Naive thymus-derived CD8-positive, alpha-beta T cell (primary cell): ENCODE measurements at regions of chr17 and their contacts with region 1.

Region 1: DNA sequence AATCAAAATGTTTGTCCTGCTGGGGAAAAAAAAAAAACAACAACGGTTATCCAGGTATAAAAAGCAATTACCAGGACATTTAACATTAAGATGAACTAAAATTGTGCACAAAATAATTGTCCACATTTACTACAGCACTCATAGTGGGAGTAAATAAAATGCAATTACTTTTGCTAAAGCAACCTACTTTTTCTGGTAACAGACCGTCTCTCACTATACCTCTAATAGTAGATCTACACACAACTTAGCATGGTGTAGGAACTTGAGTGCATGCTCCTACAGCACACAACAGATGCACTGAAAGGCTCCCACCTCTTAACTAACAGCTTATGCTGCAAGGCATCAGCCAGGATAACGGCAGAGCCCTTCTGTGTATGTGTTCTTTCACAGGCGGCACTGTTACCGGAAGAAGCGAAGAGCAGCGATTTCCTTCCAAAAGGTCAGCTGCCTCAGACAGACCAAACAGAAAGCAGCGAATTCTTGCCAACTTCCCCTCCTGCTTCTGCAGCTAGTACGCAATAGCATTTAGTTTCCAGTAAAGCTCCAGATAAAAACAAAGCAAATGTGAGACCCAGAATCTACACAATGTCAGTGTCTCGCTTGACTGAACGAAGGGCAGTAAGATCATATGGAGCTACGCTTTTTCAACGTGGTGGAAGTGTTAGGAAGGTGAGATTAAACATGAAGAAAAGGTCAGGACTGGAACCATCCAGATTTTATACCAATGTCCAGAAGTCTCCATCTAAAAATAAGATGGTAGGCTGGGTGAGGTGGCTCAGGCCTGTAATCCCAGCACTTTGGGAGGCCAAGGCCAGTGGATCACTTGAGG is 27.6 kb downstream of the STAT5B start:
- DNase-seq: peak; percentile 50 to 92 (median 80)
- ATAC-seq: peak; percentile 85 to 91
- H3K4me3 Mint-ChIP-seq: peak overlapping the region; percentile 75 to 96 (median 90)
- H3K27ac Mint-ChIP-seq: peak overlapping the region; percentile 96 to 100 (median 98)
- H3K4me1 Mint-ChIP-seq: peaks cover 28 to 74% (median 64%) of the 10 kb centered on the region in 4 donors
- H3K27me3 Mint-ChIP-seq: no peaks in the 10 kb centered on the region

Region 2: DNA sequence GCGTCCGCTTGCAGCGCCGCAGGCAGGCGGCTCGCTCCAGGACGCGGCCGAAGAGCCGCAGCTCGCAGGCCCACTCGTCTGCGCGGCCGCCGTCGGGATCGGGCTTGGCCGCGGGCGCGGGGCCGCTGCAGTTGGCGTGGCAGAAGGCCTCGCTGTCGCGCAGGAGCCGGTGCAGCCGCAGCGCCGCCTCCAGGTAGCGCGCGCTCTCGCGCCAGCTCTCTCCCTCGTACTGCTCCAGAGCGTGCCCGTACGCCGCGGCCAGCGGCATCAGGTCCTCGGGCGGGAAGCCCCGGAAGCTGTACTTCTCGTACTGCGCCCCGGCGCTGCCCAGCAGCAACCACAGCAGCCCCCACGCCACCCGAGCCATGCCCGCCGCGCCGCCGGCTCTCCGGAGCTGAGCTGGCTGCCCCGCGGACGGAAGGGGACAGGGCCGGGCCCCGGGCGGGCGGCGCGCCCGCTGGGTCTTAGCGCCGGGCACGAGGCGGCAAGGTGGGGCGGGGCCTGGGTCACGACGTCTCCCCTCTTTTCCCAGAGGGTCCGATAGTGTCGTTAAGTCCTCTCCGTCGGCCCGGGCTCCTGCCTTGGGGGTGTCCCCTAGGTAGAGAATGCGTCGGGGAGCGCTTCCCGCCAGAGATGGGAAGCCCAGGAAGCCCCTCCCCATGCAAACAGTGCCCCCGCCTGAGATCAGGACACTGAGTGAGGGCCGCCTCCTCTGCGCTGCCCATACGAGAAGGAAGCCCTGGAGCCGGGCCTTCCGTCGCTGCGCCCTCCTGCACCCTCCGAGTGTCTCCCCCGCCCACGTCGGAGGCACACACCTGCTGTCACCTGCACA is 436.8 kb before region 1 on chr17 and contains the start of gene P3H4:
- POLR2A ChIA-PET with region 1: interaction called, 11 read pairs
- DNase-seq: peak; percentile 57 to 83 (median 75)
- ATAC-seq: peak; percentile 91 to 92
- H3K4me3 Mint-ChIP-seq: peak within 1 kb of the TSS; percentile 87 to 97 (median 93)
- H3K27ac Mint-ChIP-seq: peak within 1 kb of the TSS; percentile 15 to 95 (median 83)
- H3K4me1 Mint-ChIP-seq: peaks cover 17 to 26% (median 24%) of the 10 kb centered on the region in 4 donors
- H3K27me3 Mint-ChIP-seq: peaks cover 0 to 4% (median 0%) of the 10 kb centered on the region in 5 donors
- polyA plus RNA-seq, gene P3H4: 4.0 to 6.2 (median 5.8) TPM

Region 3: DNA sequence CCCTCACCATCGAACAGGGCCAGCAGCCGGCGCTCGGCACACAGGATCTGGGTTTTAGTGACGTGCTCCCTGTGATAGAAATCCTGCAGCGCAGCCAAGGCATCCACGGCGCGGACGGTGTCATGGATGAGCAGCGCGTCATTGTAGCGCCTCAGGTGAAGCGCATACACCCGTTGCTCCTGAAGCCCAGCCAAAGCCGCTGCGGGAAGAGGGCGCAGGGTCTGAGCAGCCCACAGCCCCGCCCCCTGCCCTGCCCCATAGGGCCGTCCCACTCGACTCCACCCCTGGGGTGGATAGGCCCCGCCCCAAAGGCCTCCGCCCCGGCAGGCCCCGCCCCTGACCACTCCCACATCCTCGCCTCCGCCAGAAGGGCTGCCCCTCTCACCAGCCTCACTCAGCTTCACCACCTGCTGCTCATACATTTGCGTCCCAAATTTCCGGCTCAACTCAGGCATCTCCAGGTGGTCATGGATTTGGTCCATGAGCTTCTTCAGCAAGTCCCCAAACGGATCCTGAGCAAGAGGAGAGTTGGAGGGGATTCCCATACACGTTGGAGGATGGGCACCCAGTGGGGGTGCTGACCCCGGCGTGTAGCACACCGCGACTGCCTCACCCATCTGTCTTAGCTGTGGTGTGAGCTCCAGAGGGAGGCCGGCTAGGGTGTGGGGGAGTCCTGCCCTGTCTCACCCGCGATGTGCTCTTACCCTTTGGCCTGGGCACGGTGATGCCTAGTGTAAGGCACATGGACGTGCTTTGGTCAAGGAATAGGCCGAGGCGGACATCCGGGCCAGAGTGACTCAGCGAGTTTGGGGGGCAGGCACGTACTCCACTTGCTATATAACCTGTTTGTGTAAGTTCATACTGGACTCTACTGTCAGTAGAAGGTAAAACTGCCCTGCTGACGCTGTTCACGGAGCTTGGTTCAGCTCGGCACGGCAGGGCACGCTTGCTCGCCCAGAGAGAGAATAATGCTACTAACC is 140.7 kb before region 1 on chr17:
- POLR2A ChIA-PET with region 1: no interaction called
- DNase-seq: peak; percentile 84 to 97 (median 90)
- ATAC-seq: peak; percentile 79 to 81
- H3K4me3 Mint-ChIP-seq: peak overlapping the region; percentile 26 to 76 (median 60)
- H3K27ac Mint-ChIP-seq: peak overlapping the region in 9 of 10 donors; percentile 13 to 90 (median 58)
- H3K4me1 Mint-ChIP-seq: peaks cover 19 to 51% (median 45%) of the 10 kb centered on the region in 4 donors
- H3K27me3 Mint-ChIP-seq: no peaks in the 10 kb centered on the region

Region 4: DNA sequence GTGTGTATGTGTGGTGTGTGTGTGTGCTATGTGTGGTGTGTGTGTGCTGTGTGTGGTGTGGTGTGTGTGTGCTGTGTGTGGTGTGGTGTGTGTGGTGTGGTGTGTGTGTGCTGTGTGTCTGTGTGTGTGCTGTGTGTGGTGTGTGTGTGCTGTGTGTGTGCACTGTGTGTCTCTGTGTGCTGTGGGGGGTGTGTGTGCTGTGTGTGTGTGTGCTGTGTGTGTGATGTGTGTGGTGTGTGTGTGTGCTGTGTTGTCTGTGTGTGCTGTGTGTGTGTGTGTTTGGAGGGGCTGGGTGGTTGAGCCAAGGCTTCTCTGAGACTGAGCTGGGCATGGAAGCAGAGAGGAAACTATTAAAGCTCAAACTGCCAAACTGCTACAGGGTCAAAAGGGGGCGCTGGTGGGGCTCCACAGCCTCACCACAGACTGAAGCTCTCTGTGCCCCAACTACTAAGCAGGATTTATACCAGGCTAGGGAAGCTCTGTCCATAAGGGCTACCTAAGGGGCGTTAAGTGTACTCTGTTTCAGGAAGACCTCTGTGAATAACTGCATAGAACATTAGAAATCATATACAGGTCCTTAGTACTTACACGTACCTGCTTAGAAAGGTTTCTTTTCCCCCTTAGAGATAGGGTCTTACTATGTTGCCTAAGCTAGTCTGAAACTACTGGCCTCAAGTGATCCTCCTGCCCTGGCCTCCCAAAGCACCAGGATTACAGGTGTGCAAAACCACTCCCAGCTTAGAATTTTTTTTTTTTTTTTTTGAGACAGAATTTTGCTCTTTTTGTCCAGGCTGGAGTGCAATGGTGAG is 26.4 kb before region 1 on chr17:
- POLR2A ChIA-PET with region 1: interaction called, 29 read pairs
- DNase-seq: peak; percentile 31 to 74 (median 56)
- ATAC-seq: peak; percentile 94 to 95
- H3K4me3 Mint-ChIP-seq: no peak overlapping the region
- H3K27ac Mint-ChIP-seq: peak overlapping the region in 7 of 10 donors; percentile 14 to 86 (median 42)
- H3K4me1 Mint-ChIP-seq: peaks cover 2 to 9% (median 6%) of the 10 kb centered on the region in 4 donors
- H3K27me3 Mint-ChIP-seq: no peaks in the 10 kb centered on the region

Region 5: DNA sequence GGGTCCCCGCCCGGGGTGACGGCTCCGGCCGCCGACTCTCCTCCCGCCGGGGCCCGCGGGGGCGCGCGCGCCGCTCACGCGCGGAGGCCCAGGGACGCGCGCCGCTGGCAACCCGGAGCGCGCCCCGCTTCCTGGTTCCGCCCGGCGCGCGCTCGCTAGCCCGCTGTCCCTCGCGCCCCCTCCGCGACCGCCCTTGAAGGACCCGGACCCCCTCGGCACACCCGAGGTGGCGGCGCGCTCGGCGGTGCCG is 27.7 kb after region 1 on chr17 and contains the start of gene STAT5B:
- POLR2A ChIA-PET with region 1: interaction called, 142 read pairs
- DNase-seq: peak in 9 of 10 donors; percentile 51 to 83 (median 69)
- ATAC-seq: peak; percentile 53 to 57
- H3K4me3 Mint-ChIP-seq: peak within 1 kb of the TSS; percentile 86 to 100 (median 96)
- H3K27ac Mint-ChIP-seq: peak within 1 kb of the TSS; percentile 94 to 98 (median 96)
- H3K4me1 Mint-ChIP-seq: peaks cover 31 to 59% (median 52%) of the 10 kb centered on the region in 4 donors
- H3K27me3 Mint-ChIP-seq: no peaks in the 10 kb centered on the region
- polyA plus RNA-seq, gene STAT5B: 66.3 to 94.0 (median 82.8) TPM

Region 6: DNA sequence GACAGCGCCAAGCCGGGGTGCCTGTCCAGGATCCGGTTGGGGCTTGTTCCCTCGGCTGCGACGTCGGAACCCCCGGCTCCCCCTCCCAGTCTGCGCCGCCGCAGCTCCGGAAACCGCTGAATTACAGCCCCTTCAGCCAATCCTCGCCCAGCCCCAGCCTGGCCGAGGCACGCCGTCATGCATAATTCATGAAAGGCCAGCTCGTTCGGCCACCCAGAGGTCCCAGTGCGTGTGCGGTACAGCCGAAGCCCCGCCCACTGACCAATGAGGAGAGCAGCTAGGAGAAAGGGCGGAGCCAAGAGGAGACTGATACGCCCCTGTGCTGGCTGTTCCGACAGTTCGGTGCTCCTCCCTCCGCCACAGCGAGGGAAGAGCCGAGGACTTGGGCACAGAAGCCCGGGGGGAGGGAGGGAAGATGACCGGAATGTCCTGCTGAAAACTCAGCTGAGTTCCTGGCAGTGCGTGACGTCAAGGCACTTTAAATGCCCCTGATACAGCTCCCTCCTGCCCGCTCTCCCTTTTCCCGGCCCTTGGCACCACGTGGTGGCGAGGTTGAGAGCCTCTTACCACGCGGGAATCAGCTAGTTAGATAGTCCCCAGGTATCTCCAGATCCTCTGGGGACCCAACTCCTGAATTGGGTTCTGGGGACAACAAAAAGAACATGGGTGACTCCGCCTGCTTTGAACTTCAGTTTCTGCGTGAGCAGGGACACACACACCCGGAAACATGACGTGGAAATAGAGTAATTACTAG is 140.0 kb after region 1 on chr17 and contains the start of gene STAT3:
- POLR2A ChIA-PET with region 1: interaction called, 13 read pairs
- DNase-seq: peak; percentile 100
- ATAC-seq: peak; percentile 80 to 88
- H3K4me3 Mint-ChIP-seq: peak within 1 kb of the TSS; percentile 91 to 99 (median 97)
- H3K27ac Mint-ChIP-seq: peak within 1 kb of the TSS; percentile 98 to 100 (median 100)
- H3K4me1 Mint-ChIP-seq: peaks cover 16 to 64% (median 46%) of the 10 kb centered on the region in 4 donors
- H3K27me3 Mint-ChIP-seq: no peaks in the 10 kb centered on the region
- polyA plus RNA-seq, gene STAT3: 129 to 154 (median 153) TPM